ENCODE measurements at regions of chr6 and their contacts with region 1.

Region 1: GRCh38 chr6:80094017-80094416 is 12.5 kb upstream of the BCKDHB start:
- DNase-seq: no peak
- ATAC-seq: no peak

Region 2: DNA sequence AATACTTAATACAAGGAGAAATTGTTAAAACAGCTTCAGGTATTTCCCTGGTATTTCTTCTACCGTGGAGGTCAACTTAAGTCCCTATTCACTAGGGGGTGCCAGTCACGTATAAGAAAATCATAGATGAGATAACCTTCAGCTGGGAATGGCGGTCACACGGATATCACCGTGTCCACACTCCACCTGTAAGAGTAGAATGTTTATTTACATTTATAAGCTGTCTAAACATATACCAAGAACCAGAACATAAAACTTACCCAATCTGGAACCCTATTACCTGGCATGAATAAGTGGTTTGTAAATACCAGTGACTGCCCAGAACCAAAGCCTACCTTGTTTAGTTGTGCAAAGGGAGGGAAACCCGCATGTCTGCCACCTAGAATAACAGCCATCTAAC is 144.8 kb before region 1 on chr6:
- intact Hi-C with region 1: loop called in 1 of 2 experiments (anchors 5 kb)
- DNase-seq: peak; percentile 43 to 74
- ATAC-seq: peak; percentile 67